Activated CD4-positive, alpha-beta memory T cell treated with anti-CD3 and anti-CD28 coated beads for 36 hours (primary cell): ENCODE measurements at regions of chr1 and their contacts with region 1.

Region 1: GRCh38 chr1:91511386-91511785 is 10.7 kb downstream of the CDC7 start:
- DNase-seq: no peak
- H3K4me3 Mint-ChIP-seq: no peak overlapping the region
- H3K27ac Mint-ChIP-seq: no peak overlapping the region
- H3K4me1 Mint-ChIP-seq: peaks cover 3% of the 10 kb centered on the region
- H3K27me3 Mint-ChIP-seq: no peaks in the 10 kb centered on the region

Region 2: DNA sequence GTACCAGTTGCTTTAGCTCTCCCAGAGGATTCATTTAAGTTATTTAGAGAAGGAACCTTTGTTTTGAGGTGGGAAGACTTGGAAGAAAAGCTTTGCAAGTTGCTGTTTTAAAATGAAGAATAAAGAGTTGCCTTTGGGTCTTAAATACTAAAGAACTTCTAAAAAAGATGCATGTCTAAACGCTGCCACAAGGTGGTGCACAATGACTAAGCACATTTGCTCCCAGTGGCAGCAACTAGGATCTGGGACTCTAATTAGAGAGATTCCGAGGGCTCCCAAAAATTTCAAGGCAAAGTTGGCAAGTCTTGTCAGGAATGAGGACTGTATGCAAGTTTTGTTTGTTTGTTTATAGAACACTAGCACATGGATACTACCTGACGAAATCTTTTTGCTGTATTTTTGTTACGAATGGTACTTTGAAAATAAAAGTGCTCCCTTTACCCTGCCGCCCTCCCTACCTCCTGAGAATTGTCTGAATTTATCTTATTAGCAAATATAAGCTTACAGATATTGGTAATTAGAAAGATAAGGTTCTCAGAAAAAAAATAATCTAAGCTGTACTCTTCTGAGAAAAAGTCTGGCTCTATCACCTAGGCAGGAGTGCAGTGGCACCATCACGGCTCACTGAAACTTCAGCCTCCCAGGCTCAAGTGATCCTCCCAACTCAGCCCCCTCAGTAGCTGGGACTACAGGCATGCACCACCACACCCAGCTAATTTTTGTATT is 228.5 kb before region 1 on chr1:
- CTCF ChIA-PET with region 1: interaction called, 10 read pairs
- POLR2A ChIA-PET with region 1: no interaction called
- intact Hi-C with region 1: no loop called
- DNase-seq: peak; percentile 38
- H3K4me3 Mint-ChIP-seq: no peak overlapping the region
- H3K27ac Mint-ChIP-seq: no peak overlapping the region
- H3K4me1 Mint-ChIP-seq: no peaks in the 10 kb centered on the region
- H3K27me3 Mint-ChIP-seq: peaks cover 2% of the 10 kb centered on the region

Region 3: GRCh38 chr1:91500756-91501522 is 10.4 kb before region 1 on chr1 and contains the start of gene CDC7:
- CTCF ChIA-PET with region 1: interaction called, 31 read pairs
- POLR2A ChIA-PET with region 1: no interaction called
- intact Hi-C with region 1: no loop called
- DNase-seq: peak; percentile 88
- H3K4me3 Mint-ChIP-seq: no peak within 1 kb of the TSS
- H3K27ac Mint-ChIP-seq: no peak within 1 kb of the TSS
- H3K4me1 Mint-ChIP-seq: peaks cover 16% of the 10 kb centered on the region
- H3K27me3 Mint-ChIP-seq: no peaks in the 10 kb centered on the region
- total RNA-seq, gene CDC7: 20.2 to 20.4 TPM

Region 4: DNA sequence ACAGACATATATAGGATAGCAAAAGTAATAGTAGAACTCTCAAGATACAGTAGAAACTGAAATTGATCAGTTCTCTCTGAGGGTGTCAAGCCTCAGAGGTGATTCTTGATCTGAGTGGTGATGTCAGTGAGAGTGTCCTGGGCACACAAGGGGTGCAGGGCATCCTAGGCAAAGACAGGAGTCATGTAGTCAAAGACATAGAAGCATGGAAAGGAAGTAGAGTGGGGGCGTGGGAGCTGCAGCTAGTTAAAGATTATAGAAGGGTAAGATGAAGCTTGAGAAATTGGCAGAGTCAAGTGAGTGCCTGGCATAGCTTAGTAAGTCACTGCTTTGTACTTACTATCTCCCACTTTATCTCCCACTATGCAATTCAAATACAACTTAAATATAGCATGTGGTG is 12.1 kb after region 1 on chr1:
- CTCF ChIA-PET with region 1: interaction called, 29 read pairs
- POLR2A ChIA-PET with region 1: interaction called, 3 read pairs
- intact Hi-C with region 1: no loop called
- DNase-seq: peak; percentile 65
- H3K4me3 Mint-ChIP-seq: no peak overlapping the region
- H3K27ac Mint-ChIP-seq: no peak overlapping the region
- H3K4me1 Mint-ChIP-seq: peaks cover 32% of the 10 kb centered on the region
- H3K27me3 Mint-ChIP-seq: no peaks in the 10 kb centered on the region

Region 5: DNA sequence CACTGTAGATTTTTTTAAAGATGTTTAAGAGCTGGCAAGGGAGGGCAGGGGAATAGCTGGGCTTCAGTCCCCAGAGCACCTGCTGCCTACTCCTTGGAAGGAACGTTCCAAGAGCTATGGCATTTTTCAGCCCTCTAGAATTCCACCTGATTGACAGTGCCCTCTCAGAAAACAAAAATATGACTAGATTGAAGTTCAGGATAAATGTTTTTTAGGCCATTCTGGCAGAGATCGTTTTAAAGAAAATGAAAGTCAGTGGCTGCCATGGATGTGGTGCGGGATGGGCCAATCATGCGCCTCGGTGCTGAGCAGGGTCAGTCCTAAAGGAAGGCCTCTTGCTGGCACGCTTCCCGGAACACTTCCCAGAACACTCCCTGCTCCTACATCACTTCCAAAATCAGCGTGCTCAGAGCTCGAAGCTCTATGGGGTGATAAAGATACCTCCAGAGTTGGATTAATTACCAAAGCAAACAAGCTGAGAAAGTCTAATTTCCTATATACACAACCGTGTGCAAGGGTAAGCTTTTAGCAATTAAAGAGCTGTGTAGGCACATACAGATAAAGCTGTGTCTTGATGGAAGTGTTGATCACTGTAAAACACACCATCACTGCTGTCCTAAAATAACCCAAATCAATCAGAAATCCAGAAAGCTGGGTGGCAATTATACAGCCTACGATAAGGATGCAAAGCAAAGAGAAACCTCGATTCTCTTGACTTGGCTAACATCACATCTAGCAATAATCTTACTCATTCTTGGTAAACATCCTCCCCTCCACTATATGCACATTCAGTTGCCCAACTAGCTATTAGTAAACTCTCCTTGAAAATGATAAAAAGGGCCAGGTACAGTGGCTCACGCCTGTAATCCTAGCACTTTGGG is 340.0 kb after region 1 on chr1:
- CTCF ChIA-PET with region 1: no interaction called
- POLR2A ChIA-PET with region 1: no interaction called
- intact Hi-C with region 1: no loop called
- DNase-seq: no peak
- H3K4me3 Mint-ChIP-seq: no peak overlapping the region
- H3K27ac Mint-ChIP-seq: no peak overlapping the region
- H3K4me1 Mint-ChIP-seq: peaks cover 3% of the 10 kb centered on the region
- H3K27me3 Mint-ChIP-seq: no peaks in the 10 kb centered on the region

Region 6: GRCh38 chr1:91885716-91886506 is 374.5 kb after region 1 on chr1 and contains the start of gene TGFBR3:
- CTCF ChIA-PET with region 1: interaction called, 20 read pairs
- POLR2A ChIA-PET with region 1: no interaction called
- intact Hi-C with region 1: no loop called
- DNase-seq: peak; percentile 74
- H3K4me3 Mint-ChIP-seq: peak within 1 kb of the TSS; percentile 92
- H3K27ac Mint-ChIP-seq: peak within 1 kb of the TSS; percentile 69
- H3K4me1 Mint-ChIP-seq: peaks cover 41% of the 10 kb centered on the region
- H3K27me3 Mint-ChIP-seq: peaks cover 6% of the 10 kb centered on the region
- total RNA-seq, gene TGFBR3: 4.5 to 4.9 TPM

Region 7: GRCh38 chr1:91924146-91924545 is 412.8 kb after region 1 on chr1:
- CTCF ChIA-PET with region 1: interaction called, 87 read pairs
- POLR2A ChIA-PET with region 1: no interaction called
- intact Hi-C with region 1: loop called (anchors 1 kb)
- DNase-seq: no peak
- H3K4me3 Mint-ChIP-seq: no peak overlapping the region
- H3K27ac Mint-ChIP-seq: no peak overlapping the region
- H3K4me1 Mint-ChIP-seq: peaks cover 7% of the 10 kb centered on the region
- H3K27me3 Mint-ChIP-seq: no peaks in the 10 kb centered on the region